Sigmoid colon (tissue), 7 donors: ENCODE measurements at regions of chr1 and their contacts with region 1.

Region 1: DNA sequence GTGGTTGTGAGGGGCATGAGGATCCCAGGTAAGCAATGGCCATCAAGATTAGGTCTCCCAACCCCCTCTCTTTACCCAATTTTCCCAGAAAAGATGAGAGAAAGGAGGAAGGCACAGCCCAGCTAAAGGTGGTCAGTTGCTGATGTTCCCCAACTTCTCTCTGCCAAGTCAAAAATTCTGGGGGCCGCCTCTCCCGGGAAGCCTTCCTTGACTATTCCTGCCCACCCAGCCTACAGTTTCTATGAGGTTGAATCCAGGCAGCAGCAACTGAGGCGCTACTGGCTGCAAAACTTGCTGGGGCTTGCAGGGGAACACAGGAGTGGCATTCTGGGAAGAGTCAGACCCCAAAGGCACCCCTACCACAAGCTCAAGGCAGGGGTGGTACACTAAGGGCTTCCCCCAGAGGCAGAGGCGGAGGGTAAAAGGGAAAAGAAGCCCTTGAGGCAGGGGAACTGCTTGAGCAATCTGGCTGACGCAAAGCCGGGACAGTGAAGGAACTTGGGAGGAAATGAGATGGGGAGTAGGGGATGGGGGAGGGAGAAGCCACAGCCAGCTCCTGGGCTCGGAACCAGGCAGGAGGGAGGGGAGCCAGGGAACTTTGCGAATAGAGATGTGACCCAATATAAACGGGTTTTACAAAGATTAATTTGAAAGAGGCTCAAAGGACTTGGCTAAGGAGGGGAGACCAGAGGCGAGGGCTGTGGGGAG is 31.2 kb downstream of the SDC3 start:
- DNase-seq: peak; percentile 96
- H3K4me3 ChIP-seq: no peak overlapping the region
- H3K27ac ChIP-seq: peak overlapping the region; percentile 72 to 95 (median 86)
- H3K4me1 ChIP-seq: peaks cover 0 to 64% (median 62%) of the 10 kb centered on the region in 4 donors
- H3K27me3 ChIP-seq: no peaks in the 10 kb centered on the region
- CTCF ChIP-seq: no peak
- EP300 ChIP-seq: peak in 1 of 4 donors; percentile 36
- POLR2A ChIP-seq: no peak

Region 2: DNA sequence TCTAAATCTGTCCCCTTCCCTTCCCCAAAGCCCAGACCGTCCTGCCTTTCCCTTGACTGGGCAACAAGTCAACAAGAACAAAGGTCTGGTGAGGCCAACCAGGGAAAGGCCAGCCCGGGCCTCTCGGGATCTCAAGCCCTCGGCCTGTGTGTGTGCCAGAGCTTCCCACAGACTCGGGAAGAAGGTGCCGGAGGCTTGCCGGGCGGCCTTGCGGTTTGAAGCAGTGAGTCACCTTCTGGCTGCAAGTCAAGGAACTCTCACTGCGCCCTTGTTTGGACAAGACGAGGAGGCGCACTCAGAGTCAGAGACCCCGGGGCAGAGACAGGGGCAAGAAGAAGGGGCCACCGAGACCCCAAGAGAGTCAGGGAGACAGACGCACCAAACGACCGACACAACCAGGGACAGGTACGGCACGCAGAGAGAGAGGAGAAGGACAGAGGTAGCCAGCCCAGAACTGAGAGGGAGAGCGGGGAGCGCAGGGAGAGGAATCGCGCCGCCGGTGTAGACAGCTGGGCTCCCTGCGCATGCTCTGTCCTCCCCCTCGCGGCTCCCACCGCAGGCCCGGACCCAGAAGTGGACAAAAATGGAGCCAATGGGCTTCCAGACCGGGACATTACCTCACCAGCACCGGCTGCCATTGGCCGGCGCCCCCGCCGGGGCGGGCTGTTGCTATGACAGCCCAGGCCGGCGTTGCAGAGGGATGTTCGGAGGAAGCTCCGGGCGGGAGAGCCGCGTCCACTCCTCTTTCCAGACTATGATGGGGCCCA is 53.2 kb before region 1 on chr1:
- intact Hi-C with region 1: loop called (anchors 2 kb)
- DNase-seq: peak; percentile 99
- H3K4me3 ChIP-seq: peak overlapping the region; percentile 22 to 49 (median 46)
- H3K27ac ChIP-seq: peak overlapping the region; percentile 89 to 97 (median 91)
- H3K4me1 ChIP-seq: peaks cover 0 to 74% (median 61%) of the 10 kb centered on the region in 4 donors
- H3K27me3 ChIP-seq: no peaks in the 10 kb centered on the region
- CTCF ChIP-seq: no peak
- EP300 ChIP-seq: peak in 1 of 4 donors; percentile 40
- POLR2A ChIP-seq: peak; percentile 89 to 95

Region 3: GRCh38 chr1:30888391-30888790 is 11.0 kb after region 1 on chr1:
- intact Hi-C with region 1: no loop called
- DNase-seq: peak; percentile 96
- H3K4me3 ChIP-seq: no peak overlapping the region
- H3K27ac ChIP-seq: peak overlapping the region; percentile 92 to 95 (median 94)
- H3K4me1 ChIP-seq: peaks cover 0 to 100% (median 92%) of the 10 kb centered on the region in 4 donors
- H3K27me3 ChIP-seq: no peaks in the 10 kb centered on the region
- CTCF ChIP-seq: no peak
- EP300 ChIP-seq: no peak
- POLR2A ChIP-seq: peak in 1 of 2 donors; percentile 19

Region 4: DNA sequence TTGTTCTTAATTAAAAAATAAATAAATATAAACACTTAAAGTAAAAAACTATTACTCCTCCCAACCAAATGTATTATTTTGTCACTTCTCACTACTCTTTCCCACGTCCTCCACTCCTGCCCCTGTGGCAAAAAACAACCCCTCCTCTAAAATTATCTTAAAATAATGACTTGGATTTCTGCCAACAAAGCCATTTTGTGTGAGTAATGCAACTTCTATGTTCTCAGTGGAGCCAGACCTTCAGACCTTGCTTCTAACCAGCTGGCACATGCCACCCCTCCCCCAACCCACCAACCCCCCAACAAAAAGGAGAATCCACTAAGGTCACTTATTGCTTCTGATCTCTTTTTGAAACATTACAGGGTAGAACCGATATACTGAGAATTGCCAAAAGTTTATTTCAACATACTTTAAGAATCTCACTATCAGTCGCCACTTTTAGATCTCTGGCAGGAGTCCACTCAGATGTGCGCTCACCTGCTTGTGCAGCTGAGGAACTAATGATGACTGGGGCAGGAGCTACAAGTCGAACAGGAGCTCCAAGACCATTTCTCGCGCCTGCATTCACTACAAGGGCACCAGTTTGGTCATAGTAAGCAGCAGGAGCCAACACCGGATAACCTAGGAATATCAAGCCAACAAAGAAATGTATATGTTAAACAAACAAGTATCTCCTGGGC is 89.5 kb after region 1 on chr1:
- intact Hi-C with region 1: no loop called
- DNase-seq: no peak
- H3K4me3 ChIP-seq: no peak overlapping the region
- H3K27ac ChIP-seq: peak overlapping the region in 3 of 4 donors; percentile 41 to 49 (median 49)
- H3K4me1 ChIP-seq: peaks cover 0 to 29% (median 21%) of the 10 kb centered on the region in 4 donors
- H3K27me3 ChIP-seq: no peaks in the 10 kb centered on the region
- CTCF ChIP-seq: no peak
- EP300 ChIP-seq: no peak
- POLR2A ChIP-seq: no peak